Ovary (tissue), 10 donors: ENCODE measurements at regions of chr5 and their contacts with region 1.

Region 1: DNA sequence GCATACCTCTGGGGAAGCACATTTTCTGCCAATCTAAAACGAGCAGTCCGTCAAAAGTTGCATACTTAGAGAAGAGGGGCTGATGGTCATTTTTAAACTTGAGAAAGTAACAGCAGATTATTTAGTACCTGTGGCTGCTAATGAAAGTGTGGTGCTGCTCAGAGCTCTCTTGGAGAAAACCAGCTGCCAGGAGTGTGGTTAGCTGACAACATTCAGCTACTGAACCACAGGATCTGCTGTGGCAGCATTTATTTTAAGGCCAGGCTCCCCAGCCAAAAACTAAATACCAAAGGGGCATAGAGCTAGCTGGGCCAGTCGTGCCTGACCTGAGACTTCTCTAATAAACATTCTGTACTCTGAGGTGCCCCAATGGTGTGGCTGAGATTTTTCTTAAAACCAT is 203.6 kb downstream of the EDIL3 start:
- DNase-seq: no peak
- H3K4me3 ChIP-seq: no peak overlapping the region
- H3K27ac ChIP-seq: no peak overlapping the region
- H3K4me1 ChIP-seq: no peaks in the 10 kb centered on the region
- H3K27me3 ChIP-seq: no peaks in the 10 kb centered on the region
- CTCF ChIP-seq: no peak
- EP300 ChIP-seq: no peak
- POLR2A ChIP-seq: no peak

Region 2: DNA sequence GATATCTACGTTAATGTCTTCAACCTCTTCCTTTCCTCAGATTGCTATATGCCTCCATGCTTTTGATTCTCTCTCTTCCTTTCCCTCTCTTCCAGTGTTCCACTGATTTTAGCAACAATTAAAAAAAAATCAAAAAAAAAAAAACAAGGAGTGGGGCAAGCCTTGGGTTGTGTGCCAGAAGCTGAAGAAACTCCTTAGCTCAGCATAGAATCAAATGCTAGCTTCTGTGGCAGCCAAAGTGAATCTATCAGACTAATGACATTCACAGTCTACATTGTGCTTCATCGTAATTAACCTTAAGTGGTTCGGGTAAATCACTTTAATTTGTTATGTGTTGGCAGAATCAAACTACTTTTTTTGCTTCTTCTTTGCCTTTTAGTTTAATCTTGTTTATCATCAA is 1341.2 kb before region 1 on chr5:
- intact Hi-C with region 1: loop called in 1 of 4 experiments (anchors 10 kb)
- DNase-seq: no peak
- H3K4me3 ChIP-seq: no peak overlapping the region
- H3K27ac ChIP-seq: no peak overlapping the region
- H3K4me1 ChIP-seq: no peaks in the 10 kb centered on the region
- H3K27me3 ChIP-seq: no peaks in the 10 kb centered on the region
- CTCF ChIP-seq: no peak
- EP300 ChIP-seq: no peak
- POLR2A ChIP-seq: no peak

Region 3: GRCh38 chr5:84113246-84114105 is 67.6 kb before region 1 on chr5:
- intact Hi-C with region 1: no loop called
- DNase-seq: no peak
- H3K4me3 ChIP-seq: no peak overlapping the region
- H3K27ac ChIP-seq: no peak overlapping the region
- H3K4me1 ChIP-seq: no peaks in the 10 kb centered on the region
- H3K27me3 ChIP-seq: no peaks in the 10 kb centered on the region
- CTCF ChIP-seq: no peak
- EP300 ChIP-seq: no peak
- POLR2A ChIP-seq: no peak

Region 4: GRCh38 chr5:84228266-84228665 is 47.2 kb after region 1 on chr5:
- intact Hi-C with region 1: no loop called
- DNase-seq: no peak
- H3K4me3 ChIP-seq: no peak overlapping the region
- H3K27ac ChIP-seq: no peak overlapping the region
- H3K4me1 ChIP-seq: no peaks in the 10 kb centered on the region
- H3K27me3 ChIP-seq: no peaks in the 10 kb centered on the region
- CTCF ChIP-seq: no peak
- EP300 ChIP-seq: no peak
- POLR2A ChIP-seq: no peak